Breast epithelium (tissue), 4 donors: ENCODE measurements at regions of chr6 and their contacts with region 1.

Region 1: GRCh38 chr6:116667623-116668022 is 943 bp downstream of the ZUP1 start:
- DNase-seq: no peak
- H3K4me3 ChIP-seq: peak overlapping the region; percentile 69 to 80 (median 77)
- H3K27ac ChIP-seq: peak overlapping the region in 1 of 2 donors; percentile 91
- H3K4me1 ChIP-seq: peaks cover 0 to 3% of the 10 kb centered on the region in 2 donors
- H3K27me3 ChIP-seq: no peaks in the 10 kb centered on the region
- CTCF ChIP-seq: no peak
- POLR2A ChIP-seq: no peak

Region 2: DNA sequence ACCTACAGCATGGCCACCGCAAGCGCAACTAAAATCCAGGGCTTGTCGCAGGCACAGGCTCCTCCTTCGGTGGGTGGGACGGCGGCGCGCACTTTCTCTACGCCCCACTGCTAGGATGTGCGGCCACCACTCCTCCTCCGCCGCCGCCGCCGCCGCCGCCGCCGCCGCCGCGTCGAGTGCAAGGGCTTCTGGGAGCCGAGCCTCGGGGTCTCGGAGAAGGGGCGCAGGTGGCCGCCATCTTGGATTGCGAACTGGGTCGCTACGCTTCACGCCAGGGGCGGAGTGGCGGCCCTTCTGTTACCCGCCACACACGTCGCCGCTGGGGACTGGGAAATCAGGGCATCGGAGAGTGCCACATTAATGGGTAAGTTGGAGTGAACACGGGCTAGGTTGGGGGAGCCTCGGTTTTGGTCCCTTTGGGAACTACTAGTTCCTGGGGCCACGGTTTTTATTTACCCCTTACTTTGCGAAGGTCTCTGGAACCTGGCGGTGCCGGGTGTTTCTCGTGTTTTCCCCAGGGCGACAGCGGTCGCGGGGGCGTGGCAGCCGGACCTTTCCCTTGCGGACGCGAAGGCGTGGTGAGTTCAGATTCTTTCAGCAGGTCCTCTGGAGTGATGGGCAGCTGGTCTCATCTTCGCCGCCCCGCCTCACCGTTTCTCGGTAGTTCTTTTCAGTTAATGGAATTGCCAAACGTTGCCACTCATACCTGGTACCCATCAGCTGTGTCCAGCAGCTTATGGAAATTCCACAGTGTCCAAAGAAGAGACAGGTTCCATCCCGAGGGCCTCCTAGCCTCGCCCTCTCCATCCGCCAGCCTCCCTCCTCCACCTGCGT is 13.6 kb after region 1 on chr6 and contains the start of gene KPNA5:
- intact Hi-C with region 1: loop called (anchors 1 kb)
- DNase-seq: peak; percentile 83 to 86
- H3K4me3 ChIP-seq: peak within 1 kb of the TSS; percentile 68 to 71 (median 70)
- H3K27ac ChIP-seq: peak within 1 kb of the TSS; percentile 80 to 85
- H3K4me1 ChIP-seq: no peaks in the 10 kb centered on the region
- H3K27me3 ChIP-seq: no peaks in the 10 kb centered on the region
- CTCF ChIP-seq: no peak
- POLR2A ChIP-seq: peak; percentile 14
- total RNA-seq, gene KPNA5: 10.8 to 14.3 (median 11.2) TPM